ENCODE measurements at regions of chr3 and their contacts with region 1.

Region 1: DNA sequence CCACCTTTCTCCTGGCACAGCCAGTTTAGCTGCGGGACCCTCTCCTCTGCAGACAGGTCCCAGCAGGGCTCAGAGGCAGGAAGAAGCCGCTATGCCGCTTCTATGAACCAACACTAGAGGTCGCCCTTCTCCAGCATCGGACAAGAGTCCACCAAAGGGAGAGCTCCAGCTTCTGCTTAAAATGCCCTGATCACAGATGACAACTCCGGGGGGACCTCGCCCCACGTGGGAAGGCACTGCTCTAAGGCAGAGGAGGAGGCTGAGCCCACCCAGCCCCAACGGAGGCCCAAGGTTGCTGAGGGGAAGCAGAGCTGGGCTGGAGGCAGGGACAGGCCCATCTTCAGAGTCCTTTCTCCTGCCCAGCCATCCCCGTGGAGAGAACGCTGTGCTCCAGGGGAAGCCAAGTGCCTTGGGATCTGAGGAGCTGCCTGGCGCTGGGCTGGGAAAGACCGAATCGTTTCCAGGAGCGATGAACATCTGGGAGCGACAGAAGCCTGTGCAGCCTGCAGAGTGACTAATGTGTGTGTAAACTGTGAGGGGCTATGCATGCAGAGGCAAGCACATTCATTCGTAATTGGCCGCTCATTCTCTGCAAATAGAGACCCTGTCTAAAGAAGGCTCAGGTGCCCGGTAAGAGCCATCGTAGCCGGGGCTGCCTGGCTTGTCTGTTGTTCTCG is 43.5 kb upstream of the BDH1 start:
- DNase-seq: peak; percentile 86
- H3K4me3 ChIP-seq: no peak overlapping the region
- H3K27ac ChIP-seq: no peak overlapping the region
- H3K4me1 ChIP-seq: peaks cover 0 to 10% (median 4%) of the 10 kb centered on the region in 4 donors
- H3K27me3 ChIP-seq: no peaks in the 10 kb centered on the region
- CTCF ChIP-seq: peak; percentile 70 to 89 (median 82)
- EP300 ChIP-seq: no peak
- POLR2A ChIP-seq: no peak

Region 2: GRCh38 chr3:197354319-197355001 is 244.8 kb before region 1 on chr3:
- intact Hi-C with region 1: no loop called
- DNase-seq: peak; percentile 88
- H3K4me3 ChIP-seq: peak overlapping the region in 3 of 4 donors; percentile 4 to 26 (median 13)
- H3K27ac ChIP-seq: peak overlapping the region in 3 of 4 donors; percentile 42 to 75 (median 71)
- H3K4me1 ChIP-seq: peaks cover 0 to 42% (median 37%) of the 10 kb centered on the region in 4 donors
- H3K27me3 ChIP-seq: no peaks in the 10 kb centered on the region
- CTCF ChIP-seq: no peak
- EP300 ChIP-seq: no peak
- POLR2A ChIP-seq: no peak

Region 3: GRCh38 chr3:197674741-197675562 is 75.7 kb after region 1 on chr3:
- intact Hi-C with region 1: loop called (anchors 5 kb)
- DNase-seq: no peak
- H3K4me3 ChIP-seq: no peak overlapping the region
- H3K27ac ChIP-seq: no peak overlapping the region
- H3K4me1 ChIP-seq: no peaks in the 10 kb centered on the region
- H3K27me3 ChIP-seq: no peaks in the 10 kb centered on the region
- CTCF ChIP-seq: no peak
- EP300 ChIP-seq: no peak
- POLR2A ChIP-seq: no peak